GM12878 (cell line): ENCODE measurements at regions of chr20 and their contacts with region 1.

Region 1: DNA sequence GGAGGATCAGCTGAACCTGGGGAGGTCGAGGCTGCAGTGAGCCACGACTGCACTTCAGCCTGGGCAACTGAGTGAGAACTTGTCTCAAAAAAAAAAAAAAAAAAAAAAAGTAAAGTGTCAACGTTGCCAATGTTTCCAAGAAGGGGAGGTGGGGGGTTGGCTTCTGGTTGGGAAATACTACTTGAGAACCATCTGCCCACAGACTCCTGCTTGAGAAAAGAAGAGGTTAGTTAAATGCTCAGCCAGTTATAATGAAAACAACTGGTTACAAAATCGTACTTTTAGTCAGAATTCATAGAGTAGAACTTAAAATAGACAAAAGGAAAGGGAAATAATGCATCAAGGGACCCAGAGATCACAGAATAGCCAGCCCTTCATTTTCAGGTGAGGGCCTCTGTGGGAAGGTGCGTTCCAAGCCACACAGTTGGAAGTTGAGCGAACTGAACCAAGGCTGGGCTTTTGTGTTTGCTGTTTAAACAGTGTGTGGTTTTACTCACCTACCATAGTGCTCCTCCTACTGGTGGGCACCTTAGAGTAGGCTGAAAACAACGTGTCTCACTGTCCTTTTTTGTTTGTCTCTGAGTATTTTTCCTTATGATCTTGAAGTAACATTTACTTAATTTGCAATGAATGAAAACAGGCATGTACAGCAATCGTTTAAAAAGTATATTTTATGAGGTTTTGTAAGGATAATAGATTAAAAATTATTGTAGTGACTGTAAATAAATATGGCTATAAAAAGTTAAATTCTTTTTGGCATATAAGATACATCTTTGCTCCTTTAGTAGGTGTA is 200.7 kb downstream of the BCAS1 start:
- DNase-seq: peak; percentile 91
- ATAC-seq: peak; percentile 73
- H3K4me3 ChIP-seq: no peak overlapping the region
- H3K27ac ChIP-seq: peak overlapping the region; percentile 68
- H3K4me1 ChIP-seq: peaks cover 51% of the 10 kb centered on the region
- H3K27me3 ChIP-seq: no peaks in the 10 kb centered on the region
- CTCF ChIP-seq: peak; percentile 85 to 93 (median 87)
- EP300 ChIP-seq: peak in 1 of 2 experiments; percentile 61; a peak in 2 of 4 replicates
- POLR2A ChIP-seq: no peak
- RAD21 ChIP-seq: peak; percentile 86

Region 2: GRCh38 chr20:53708129-53708968 is 161.3 kb before region 1 on chr20:
- CTCF ChIA-PET with region 1: interaction called, 4 read pairs
- POLR2A ChIA-PET with region 1: interaction called, 3 read pairs
- RAD21 ChIA-PET with region 1: interaction called, 16 read pairs
- SMC1A ChIA-PET with region 1: interaction called, 15 read pairs
- in situ Hi-C with region 1: no loop called
- intact Hi-C with region 1: no loop called
- DNase-seq: peak; percentile 94
- ATAC-seq: peak; percentile 83
- H3K4me3 ChIP-seq: peak overlapping the region; percentile 43; the same call in 1 of the 2 replicates
- H3K27ac ChIP-seq: peak overlapping the region; percentile 97
- H3K4me1 ChIP-seq: peaks cover 45% of the 10 kb centered on the region
- H3K27me3 ChIP-seq: no peaks in the 10 kb centered on the region
- CTCF ChIP-seq: no peak
- EP300 ChIP-seq: peak in 1 of 2 experiments; percentile 35; a peak in 3 of 4 replicates
- POLR2A ChIP-seq: peak; percentile 36
- RAD21 ChIP-seq: 0 out of 2 replicates have a peak, but pooled peaks have one; percentile 6

Region 3: GRCh38 chr20:53828682-53829254 is 40.9 kb before region 1 on chr20:
- CTCF ChIA-PET with region 1: interaction called, 10 read pairs
- POLR2A ChIA-PET with region 1: interaction called, 6 read pairs
- RAD21 ChIA-PET with region 1: interaction called, 27 read pairs
- SMC1A ChIA-PET with region 1: interaction called, 49 read pairs
- in situ Hi-C with region 1: no loop called
- intact Hi-C with region 1: loop called (anchors 5 kb)
- DNase-seq: no peak
- ATAC-seq: peak; percentile 2; the same call in 2 of the 3 replicates
- H3K4me3 ChIP-seq: peak overlapping the region; percentile 56
- H3K27ac ChIP-seq: peak overlapping the region; percentile 91
- H3K4me1 ChIP-seq: peaks cover 37% of the 10 kb centered on the region
- H3K27me3 ChIP-seq: no peaks in the 10 kb centered on the region
- CTCF ChIP-seq: 0 out of 6 replicates have a peak, but pooled peaks of 1 of the 3 experiments have one; percentile 4
- EP300 ChIP-seq: no peak
- POLR2A ChIP-seq: no peak
- RAD21 ChIP-seq: 0 out of 2 replicates have a peak, but pooled peaks have one; percentile 1

Region 4: GRCh38 chr20:53857723-53858236 is 11.9 kb before region 1 on chr20:
- CTCF ChIA-PET with region 1: interaction called, 11 read pairs
- POLR2A ChIA-PET with region 1: interaction called, 5 read pairs
- RAD21 ChIA-PET with region 1: interaction called, 9 read pairs
- SMC1A ChIA-PET with region 1: interaction called, 133 read pairs
- in situ Hi-C with region 1: no loop called
- intact Hi-C with region 1: no loop called
- DNase-seq: no peak
- ATAC-seq: no peak
- H3K4me3 ChIP-seq: no peak overlapping the region
- H3K27ac ChIP-seq: no peak overlapping the region
- H3K4me1 ChIP-seq: 0 out of 2 replicates have a peak, but pooled peaks cover 2% of the 10 kb centered on the region
- H3K27me3 ChIP-seq: no peaks in the 10 kb centered on the region
- CTCF ChIP-seq: no peak
- EP300 ChIP-seq: no peak
- POLR2A ChIP-seq: no peak
- RAD21 ChIP-seq: no peak

Region 5: DNA sequence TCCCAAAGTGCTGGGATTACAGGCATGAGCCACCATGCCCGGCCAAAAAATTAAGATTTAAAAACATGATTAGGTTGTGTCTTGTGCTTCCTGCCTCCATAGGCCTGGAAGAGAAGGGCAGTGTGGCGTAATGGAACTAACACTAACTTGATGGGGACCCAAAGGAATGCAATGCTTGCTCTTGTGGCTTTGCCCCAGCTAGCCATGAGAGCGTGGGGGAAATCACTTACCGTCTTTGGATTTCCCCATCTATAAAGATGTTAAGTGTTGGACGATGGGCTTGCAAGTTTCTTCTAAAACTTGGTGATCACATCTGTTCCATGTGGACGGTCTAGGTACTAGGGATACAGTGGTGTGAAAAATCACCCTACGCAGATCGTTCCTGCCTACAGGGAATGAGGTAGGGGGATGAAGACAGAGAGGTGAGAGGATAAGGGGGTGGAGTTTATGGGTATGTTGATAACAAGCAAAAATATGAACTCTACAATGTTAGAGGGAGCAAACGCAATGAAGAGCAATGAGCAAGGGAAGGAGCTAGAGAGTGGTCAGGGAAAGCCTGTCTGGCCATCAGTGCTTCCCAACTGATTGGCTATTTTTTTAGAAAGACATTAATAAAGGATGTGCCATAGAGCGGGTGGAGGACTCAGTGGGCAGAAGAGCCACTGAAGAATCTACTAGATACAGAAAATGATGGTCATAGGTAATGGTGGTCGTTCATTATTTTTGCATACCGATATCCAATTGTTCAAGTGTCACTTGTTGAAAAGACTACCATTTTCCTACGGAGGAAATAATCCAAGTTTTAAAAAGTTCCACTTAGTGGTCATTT is 35.6 kb after region 1 on chr20:
- CTCF ChIA-PET with region 1: interaction called, 34 read pairs
- POLR2A ChIA-PET with region 1: interaction called, 13 read pairs
- RAD21 ChIA-PET with region 1: interaction called, 53 read pairs
- SMC1A ChIA-PET with region 1: interaction called, 47 read pairs
- in situ Hi-C with region 1: no loop called
- intact Hi-C with region 1: no loop called
- DNase-seq: no peak
- ATAC-seq: peak; percentile 51
- H3K4me3 ChIP-seq: 0 out of 2 replicates have a peak overlapping the region, but pooled peaks have one; percentile 15
- H3K27ac ChIP-seq: peak overlapping the region; percentile 72
- H3K4me1 ChIP-seq: peaks cover 43% of the 10 kb centered on the region
- H3K27me3 ChIP-seq: no peaks in the 10 kb centered on the region
- CTCF ChIP-seq: no peak
- EP300 ChIP-seq: peak in 1 of 2 experiments; percentile 50; a peak in 1 of 4 replicates
- POLR2A ChIP-seq: no peak
- RAD21 ChIP-seq: no peak

Region 6: GRCh38 chr20:53934421-53935343 is 65.0 kb after region 1 on chr20:
- CTCF ChIA-PET with region 1: interaction called, 17 read pairs
- POLR2A ChIA-PET with region 1: interaction called, 10 read pairs
- RAD21 ChIA-PET with region 1: interaction called, 18 read pairs
- SMC1A ChIA-PET with region 1: interaction called, 26 read pairs
- in situ Hi-C with region 1: no loop called
- intact Hi-C with region 1: no loop called
- DNase-seq: no peak
- ATAC-seq: peak; percentile 77
- H3K4me3 ChIP-seq: peak overlapping the region; percentile 33; the same call in 1 of the 2 replicates
- H3K27ac ChIP-seq: peak overlapping the region; percentile 91
- H3K4me1 ChIP-seq: peaks cover 52% of the 10 kb centered on the region
- H3K27me3 ChIP-seq: no peaks in the 10 kb centered on the region
- CTCF ChIP-seq: 0 out of 6 replicates have a peak, but pooled peaks of 1 of the 3 experiments have one; percentile 4
- EP300 ChIP-seq: no peak
- POLR2A ChIP-seq: 0 out of 2 replicates have a peak, but pooled peaks have one; percentile 4
- RAD21 ChIP-seq: 0 out of 2 replicates have a peak, but pooled peaks have one; percentile 12